Posterior cingulate gyrus (tissue), 11 donors: ENCODE measurements at regions of chr5 and their contacts with region 1.

Region 1: GRCh38 chr5:171336521-171337209 is 27.6 kb downstream of the TLX3 start:
- DNase-seq: peak in 7 of 10 donors; percentile 35 to 93 (median 54)

Region 2: DNA sequence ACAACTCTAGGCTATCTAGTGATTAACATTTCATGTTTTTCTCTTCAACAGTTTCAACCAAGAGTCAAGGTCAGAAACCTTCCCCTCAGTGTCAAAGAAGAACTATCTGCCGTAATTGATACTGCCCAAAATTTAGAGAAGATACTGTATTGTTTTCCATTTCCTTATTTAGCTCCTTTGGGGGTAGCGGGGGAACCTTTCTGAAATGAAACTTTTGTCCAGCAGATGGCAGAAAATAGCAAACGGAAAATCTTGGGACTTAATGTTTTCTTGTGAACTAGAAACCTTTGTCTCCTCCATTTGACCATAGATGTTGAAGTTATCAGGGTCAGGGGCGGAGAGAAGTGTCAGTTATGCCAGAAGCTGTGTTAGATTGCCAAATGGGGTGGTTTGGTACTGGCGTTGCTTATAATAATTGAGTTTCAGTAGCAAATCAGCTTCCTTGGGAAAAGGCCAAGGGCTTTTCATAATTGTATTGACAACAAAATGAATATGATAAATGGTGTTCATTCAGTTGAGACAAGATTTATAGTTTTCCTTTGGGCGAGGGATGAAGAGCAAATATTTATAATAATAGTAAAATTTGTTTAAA is 129.3 kb before region 1 on chr5:
- intact Hi-C with region 1: loop called (anchors 5 kb)
- DNase-seq: no peak

Region 3: DNA sequence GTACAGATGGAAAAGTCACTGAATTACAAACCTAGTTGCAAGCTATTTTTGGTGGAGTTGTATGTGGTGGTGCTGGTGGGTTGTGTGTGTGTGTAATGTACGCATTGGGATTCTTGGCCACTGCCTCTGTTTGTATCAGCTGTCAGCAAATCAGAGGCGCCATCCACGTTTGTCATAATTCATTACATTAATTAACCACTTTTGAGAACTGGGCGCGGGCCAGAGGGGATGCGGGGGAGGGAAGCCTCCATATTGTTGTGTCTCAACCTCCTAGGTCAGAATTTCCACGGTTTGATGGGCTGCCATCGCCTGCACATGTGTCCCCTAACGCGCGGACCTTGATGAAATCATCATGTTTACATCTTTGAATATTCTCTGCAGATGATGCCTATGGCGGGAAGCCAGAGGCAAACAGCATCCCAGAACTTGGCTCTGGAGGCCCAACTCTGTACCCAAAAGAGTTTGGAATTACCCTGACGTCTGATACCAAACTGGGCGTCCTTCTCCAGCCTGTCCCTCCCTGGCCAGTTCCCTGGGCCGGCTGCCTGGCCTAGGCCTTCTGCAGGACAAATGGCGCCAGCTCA is 137.7 kb after region 1 on chr5:
- intact Hi-C with region 1: no loop called
- DNase-seq: no peak